PC-9 (cell line): ENCODE measurements at regions of chr10 and their contacts with region 1.

Region 1: GRCh38 chr10:63561341-63561740 is 40.1 kb downstream of the REEP3 start:
- DNase-seq: no peak
- H3K4me3 ChIP-seq: no peak overlapping the region
- H3K27ac ChIP-seq: no peak overlapping the region
- H3K4me1 ChIP-seq: no peaks in the 10 kb centered on the region
- H3K27me3 ChIP-seq: no peaks in the 10 kb centered on the region
- CTCF ChIP-seq: no peak

Region 2: DNA sequence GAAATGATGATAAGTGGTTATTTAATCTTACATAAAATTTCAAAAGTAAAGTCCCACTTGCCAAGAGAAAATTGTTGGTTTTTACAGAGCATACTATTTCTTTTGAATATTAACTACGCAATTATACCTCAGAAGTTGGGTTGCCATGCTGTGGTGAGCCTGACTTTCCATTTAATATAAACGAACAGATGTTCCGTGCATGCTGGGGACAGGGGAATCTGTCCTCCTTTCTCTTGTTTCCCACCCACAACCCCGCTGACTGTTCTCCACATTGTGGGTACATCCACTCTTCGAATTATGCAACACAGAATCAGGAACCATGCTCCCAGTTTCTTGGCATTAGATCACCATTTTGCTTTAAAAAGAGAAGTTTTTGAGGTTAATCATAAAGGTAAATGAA is 1263.5 kb before region 1 on chr10:
- CTCF ChIA-PET with region 1: no interaction called
- POLR2A ChIA-PET with region 1: interaction called, 11 read pairs
- intact Hi-C with region 1: no loop called
- DNase-seq: no peak
- H3K4me3 ChIP-seq: no peak overlapping the region
- H3K27ac ChIP-seq: no peak overlapping the region
- H3K4me1 ChIP-seq: no peaks in the 10 kb centered on the region
- H3K27me3 ChIP-seq: no peaks in the 10 kb centered on the region
- CTCF ChIP-seq: no peak

Region 3: DNA sequence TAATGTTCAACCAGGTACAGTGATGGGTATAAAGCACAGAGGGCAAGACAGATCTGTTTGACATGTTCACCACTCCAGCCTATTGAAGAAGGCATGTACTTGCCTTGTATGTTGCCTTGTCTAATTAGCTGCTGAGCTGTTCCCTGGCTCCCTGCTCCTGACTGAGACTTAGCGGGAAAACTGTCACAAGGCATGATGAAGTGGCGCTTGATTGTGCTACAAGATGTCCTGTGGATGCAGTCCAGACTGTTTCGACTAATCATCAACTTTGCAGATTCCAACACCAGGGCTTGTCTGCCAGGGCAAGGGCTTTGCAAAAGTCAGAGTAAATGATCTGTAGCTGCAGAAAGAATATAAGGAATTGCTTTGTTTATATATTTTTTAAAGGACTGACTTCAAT is 564.4 kb before region 1 on chr10:
- CTCF ChIA-PET with region 1: no interaction called
- POLR2A ChIA-PET with region 1: no interaction called
- intact Hi-C with region 1: no loop called
- DNase-seq: no peak
- H3K4me3 ChIP-seq: no peak overlapping the region
- H3K27ac ChIP-seq: no peak overlapping the region
- H3K4me1 ChIP-seq: peaks cover 24% of the 10 kb centered on the region
- H3K27me3 ChIP-seq: no peaks in the 10 kb centered on the region
- CTCF ChIP-seq: no peak